ENCODE measurements at regions of chr6 and their contacts with region 1.

Region 1: GRCh38 chr6:92930171-92930570 is 489.2 kb downstream of the EPHA7 start:
- DNase-seq: no peak
- H3K4me3 ChIP-seq: no peak overlapping the region
- H3K27ac ChIP-seq: no peak overlapping the region
- H3K4me1 ChIP-seq: no peaks in the 10 kb centered on the region
- H3K27me3 ChIP-seq: no peaks in the 10 kb centered on the region
- CTCF ChIP-seq: no peak
- POLR2A ChIP-seq: no peak

Region 2: DNA sequence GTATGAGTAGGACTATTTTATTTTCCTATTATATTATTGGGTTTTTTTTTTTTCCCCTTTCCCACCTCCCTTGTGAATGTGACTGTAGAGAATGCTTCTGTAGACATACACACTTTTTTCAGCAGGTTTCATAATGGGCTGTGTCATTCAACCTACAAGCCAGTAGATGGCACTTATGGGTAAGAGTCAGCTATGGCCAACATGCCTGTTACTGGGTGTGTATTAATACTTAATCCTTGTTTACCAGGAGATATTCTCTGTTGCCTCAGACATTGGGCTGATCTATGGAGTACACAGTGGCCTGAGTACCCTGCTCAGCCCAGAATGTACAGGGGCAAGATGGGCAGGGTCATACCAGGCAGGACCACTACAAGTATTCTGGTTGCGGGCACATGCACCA is 106.7 kb after region 1 on chr6:
- intact Hi-C with region 1: loop called (anchors 5 kb)
- DNase-seq: no peak
- H3K4me3 ChIP-seq: no peak overlapping the region
- H3K27ac ChIP-seq: no peak overlapping the region
- H3K4me1 ChIP-seq: no peaks in the 10 kb centered on the region
- H3K27me3 ChIP-seq: no peaks in the 10 kb centered on the region
- CTCF ChIP-seq: no peak
- POLR2A ChIP-seq: no peak

Region 3: GRCh38 chr6:94341173-94341572 is 1411.0 kb after region 1 on chr6:
- intact Hi-C with region 1: no loop called
- DNase-seq: no peak
- H3K4me3 ChIP-seq: no peak overlapping the region
- H3K27ac ChIP-seq: no peak overlapping the region
- H3K4me1 ChIP-seq: no peaks in the 10 kb centered on the region
- H3K27me3 ChIP-seq: no peaks in the 10 kb centered on the region
- CTCF ChIP-seq: no peak
- POLR2A ChIP-seq: no peak

Measured in breast epithelium (tissue), 4 donors.